ENCODE measurements at regions of chr9 and their contacts with region 1.

Region 1: GRCh38 chr9:5909976-5910375 is 19.3 kb downstream of the MLANA start:
- DNase-seq: no peak
- H3K4me3 Mint-ChIP-seq: no peak overlapping the region
- H3K27ac Mint-ChIP-seq: peak overlapping the region; percentile 68
- H3K4me1 Mint-ChIP-seq: peaks cover 15% of the 10 kb centered on the region
- H3K27me3 Mint-ChIP-seq: no peaks in the 10 kb centered on the region

Region 2: DNA sequence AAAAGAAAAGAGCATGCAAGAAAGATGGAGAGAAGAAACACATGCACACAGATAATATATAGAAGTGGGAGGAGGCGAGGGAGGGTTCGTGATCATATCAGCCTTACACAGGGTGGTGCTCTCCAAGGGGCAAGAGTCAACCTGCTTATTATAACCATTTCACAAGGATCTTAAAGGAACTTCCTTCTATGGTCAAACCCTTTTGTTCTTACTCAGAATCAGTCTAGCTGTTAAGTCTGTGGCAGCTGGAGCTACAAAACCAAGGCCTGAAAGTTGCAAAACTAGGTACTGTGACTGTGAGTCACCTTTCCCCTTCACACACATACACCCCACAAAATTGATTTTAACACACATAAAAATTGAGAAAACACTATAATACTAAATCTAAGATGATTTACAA is 58.5 kb before region 1 on chr9:
- intact Hi-C with region 1: loop called (anchors 2 kb)
- DNase-seq: peak; percentile 84
- H3K4me3 Mint-ChIP-seq: peak overlapping the region; percentile 48
- H3K27ac Mint-ChIP-seq: peak overlapping the region; percentile 67
- H3K4me1 Mint-ChIP-seq: peaks cover 55% of the 10 kb centered on the region
- H3K27me3 Mint-ChIP-seq: no peaks in the 10 kb centered on the region

Region 3: DNA sequence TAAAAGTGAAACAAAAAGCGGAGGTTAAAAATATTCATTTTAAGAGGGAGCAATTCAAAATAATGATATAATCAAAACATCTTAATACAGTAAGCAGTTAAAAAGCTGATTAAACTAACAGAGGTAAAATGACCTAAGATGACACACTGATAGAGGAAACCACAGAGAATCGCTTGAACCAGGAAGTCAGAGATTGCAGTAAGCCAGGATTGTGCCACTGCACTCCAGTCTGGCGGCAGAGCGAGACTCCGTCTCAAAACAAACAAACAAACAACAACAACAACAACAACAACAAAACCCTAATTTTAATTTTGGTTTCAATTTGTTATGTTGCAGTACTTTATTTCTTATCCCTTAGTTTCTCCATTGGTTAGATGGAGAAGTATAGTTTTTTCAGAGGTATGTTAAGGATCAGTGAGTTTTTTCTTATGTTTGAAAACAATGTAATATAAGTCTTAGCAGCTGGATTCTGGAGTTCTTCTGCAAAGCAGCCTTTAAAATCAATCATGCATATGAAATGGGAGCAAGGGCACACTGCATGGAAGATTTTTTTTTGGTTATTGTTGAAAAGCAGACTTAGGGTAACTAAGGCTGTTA is 39.2 kb after region 1 on chr9:
- intact Hi-C with region 1: loop called (anchors 5 kb)
- DNase-seq: peak; percentile 72
- H3K4me3 Mint-ChIP-seq: peak overlapping the region; percentile 54
- H3K27ac Mint-ChIP-seq: no peak overlapping the region
- H3K4me1 Mint-ChIP-seq: peaks cover 14% of the 10 kb centered on the region
- H3K27me3 Mint-ChIP-seq: no peaks in the 10 kb centered on the region